ENCODE measurements at regions of chr1 and their contacts with region 1.

Region 1: DNA sequence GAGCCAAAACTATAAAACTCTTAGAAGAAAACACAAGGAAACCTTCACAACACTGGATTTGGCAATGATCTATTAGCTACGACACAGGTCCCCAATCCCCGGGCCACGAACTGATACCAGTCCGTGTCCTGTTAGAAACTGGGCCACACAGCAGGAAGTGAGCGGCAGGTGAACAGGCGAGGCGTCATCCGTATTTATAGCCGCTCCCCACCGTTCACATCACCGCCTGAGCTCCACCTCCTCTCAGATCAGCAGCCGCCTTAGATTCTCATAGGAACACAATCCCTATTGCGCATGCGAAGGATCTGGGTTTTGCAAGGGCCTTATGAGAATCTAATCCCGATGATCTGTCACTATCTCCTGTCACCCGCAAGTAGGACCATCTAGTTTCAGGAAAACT is 11.9 kb downstream of the TFB2M start:
- DNase-seq: no peak
- H3K4me3 ChIP-seq: no peak overlapping the region
- H3K27ac ChIP-seq: no peak overlapping the region
- H3K4me1 ChIP-seq: no peaks in the 10 kb centered on the region
- H3K27me3 ChIP-seq: no peaks in the 10 kb centered on the region
- CTCF ChIP-seq: no peak
- POLR2A ChIP-seq: no peak

Region 2: DNA sequence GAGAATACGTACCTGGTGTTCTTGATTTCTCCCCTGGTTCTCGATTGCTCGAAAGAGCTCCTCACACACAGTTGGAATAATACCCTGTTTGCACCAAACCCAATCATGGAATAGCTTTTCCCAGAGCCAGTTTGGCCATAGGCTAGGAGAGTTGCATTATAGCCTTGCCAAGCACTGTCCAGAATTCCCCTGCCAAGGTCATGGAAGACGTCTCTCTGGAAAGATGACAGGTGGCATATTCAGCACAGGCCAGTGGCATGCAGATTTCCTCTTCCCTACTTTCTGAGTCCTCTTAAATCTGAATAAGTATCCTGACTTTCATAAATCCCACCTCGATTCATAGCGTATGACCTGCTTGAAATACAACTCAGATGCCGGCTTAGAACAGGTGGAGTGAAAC is 266.5 kb after region 1 on chr1:
- intact Hi-C with region 1: loop called (anchors 5 kb)
- DNase-seq: no peak
- H3K4me3 ChIP-seq: no peak overlapping the region
- H3K27ac ChIP-seq: no peak overlapping the region
- H3K4me1 ChIP-seq: no peaks in the 10 kb centered on the region
- H3K27me3 ChIP-seq: no peaks in the 10 kb centered on the region
- CTCF ChIP-seq: no peak
- POLR2A ChIP-seq: no peak